ENCODE measurements at regions of chr5 and their contacts with region 1.

Region 1: GRCh38 chr5:84255315-84255714 is 129.4 kb downstream of the EDIL3 start:
- DNase-seq: peak; percentile 31
- H3K4me3 ChIP-seq: no peak overlapping the region
- H3K27ac ChIP-seq: no peak overlapping the region
- H3K4me1 ChIP-seq: no peaks in the 10 kb centered on the region
- H3K27me3 ChIP-seq: no peaks in the 10 kb centered on the region
- CTCF ChIP-seq: peak; percentile 30 to 59

Region 2: DNA sequence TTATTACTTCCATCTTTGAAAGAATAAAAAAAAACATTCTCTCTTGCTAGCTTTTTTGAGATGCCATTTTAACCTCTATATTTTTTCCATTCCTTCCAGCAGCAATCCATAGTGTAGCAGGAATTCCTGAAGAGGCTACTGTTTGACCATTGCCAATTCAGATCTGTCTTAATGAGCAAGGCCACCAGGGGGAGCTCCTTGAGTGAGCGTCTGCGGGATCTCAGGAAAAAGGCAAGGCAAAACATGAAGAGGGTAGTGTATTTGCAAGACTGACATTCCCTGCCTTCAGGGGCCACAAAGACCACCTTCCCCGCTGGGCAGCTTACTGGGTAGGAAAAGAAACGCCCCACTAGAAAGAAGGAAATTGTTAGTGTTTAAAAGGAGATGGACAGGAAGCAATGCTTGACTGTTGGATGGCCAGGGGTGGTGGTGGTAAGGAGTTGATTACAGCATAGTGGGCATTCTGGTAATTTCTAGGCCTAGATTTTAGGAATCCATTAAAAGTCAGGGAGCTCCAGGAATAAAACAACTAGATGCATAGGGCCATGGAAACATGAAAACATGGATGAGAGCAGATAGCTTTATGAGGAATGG is 328.1 kb before region 1 on chr5:
- CTCF ChIA-PET with region 1: interaction called, 10 read pairs
- dilution Hi-C with region 1: no loop called
- in situ Hi-C with region 1: no loop called
- intact Hi-C with region 1: loop called (anchors 1 kb)
- DNase-seq: peak; percentile 23
- H3K4me3 ChIP-seq: no peak overlapping the region
- H3K27ac ChIP-seq: no peak overlapping the region
- H3K4me1 ChIP-seq: peaks cover 32% of the 10 kb centered on the region
- H3K27me3 ChIP-seq: no peaks in the 10 kb centered on the region
- CTCF ChIP-seq: peak; percentile 64 to 83

Region 3: DNA sequence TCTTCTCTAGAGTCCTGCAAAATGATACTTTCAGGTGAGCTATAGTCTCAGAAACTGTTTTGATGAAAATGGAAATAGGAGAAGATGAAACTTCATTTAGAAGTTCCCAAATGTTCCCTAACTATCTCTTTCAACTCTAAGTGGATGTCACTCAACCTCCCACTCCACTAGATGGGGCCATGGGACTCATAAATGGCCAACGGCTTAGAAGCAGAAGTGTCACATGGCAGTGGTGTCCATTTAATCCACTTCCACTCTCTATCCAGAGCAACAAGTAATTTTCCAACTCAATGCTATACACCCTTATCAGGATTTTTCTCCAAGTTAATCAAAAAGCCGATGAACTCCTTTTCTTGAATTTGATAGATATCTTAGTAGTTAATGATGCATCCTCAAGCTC is 166.3 kb before region 1 on chr5:
- CTCF ChIA-PET with region 1: no interaction called
- dilution Hi-C with region 1: no loop called
- in situ Hi-C with region 1: no loop called
- intact Hi-C with region 1: loop called (anchors 1 kb)
- DNase-seq: no peak
- H3K4me3 ChIP-seq: no peak overlapping the region
- H3K27ac ChIP-seq: no peak overlapping the region
- H3K4me1 ChIP-seq: no peaks in the 10 kb centered on the region
- H3K27me3 ChIP-seq: no peaks in the 10 kb centered on the region
- CTCF ChIP-seq: peak; percentile 25 to 62

Region 4: GRCh38 chr5:84354101-84354500 is 98.8 kb after region 1 on chr5:
- CTCF ChIA-PET with region 1: no interaction called
- dilution Hi-C with region 1: no loop called
- in situ Hi-C with region 1: no loop called
- intact Hi-C with region 1: no loop called
- DNase-seq: no peak
- H3K4me3 ChIP-seq: no peak overlapping the region
- H3K27ac ChIP-seq: no peak overlapping the region
- H3K4me1 ChIP-seq: no peaks in the 10 kb centered on the region
- H3K27me3 ChIP-seq: peaks cover 2% of the 10 kb centered on the region
- CTCF ChIP-seq: no peak